A549 (cell line): ENCODE measurements at regions of chr1 and their contacts with region 1.

Region 1: DNA sequence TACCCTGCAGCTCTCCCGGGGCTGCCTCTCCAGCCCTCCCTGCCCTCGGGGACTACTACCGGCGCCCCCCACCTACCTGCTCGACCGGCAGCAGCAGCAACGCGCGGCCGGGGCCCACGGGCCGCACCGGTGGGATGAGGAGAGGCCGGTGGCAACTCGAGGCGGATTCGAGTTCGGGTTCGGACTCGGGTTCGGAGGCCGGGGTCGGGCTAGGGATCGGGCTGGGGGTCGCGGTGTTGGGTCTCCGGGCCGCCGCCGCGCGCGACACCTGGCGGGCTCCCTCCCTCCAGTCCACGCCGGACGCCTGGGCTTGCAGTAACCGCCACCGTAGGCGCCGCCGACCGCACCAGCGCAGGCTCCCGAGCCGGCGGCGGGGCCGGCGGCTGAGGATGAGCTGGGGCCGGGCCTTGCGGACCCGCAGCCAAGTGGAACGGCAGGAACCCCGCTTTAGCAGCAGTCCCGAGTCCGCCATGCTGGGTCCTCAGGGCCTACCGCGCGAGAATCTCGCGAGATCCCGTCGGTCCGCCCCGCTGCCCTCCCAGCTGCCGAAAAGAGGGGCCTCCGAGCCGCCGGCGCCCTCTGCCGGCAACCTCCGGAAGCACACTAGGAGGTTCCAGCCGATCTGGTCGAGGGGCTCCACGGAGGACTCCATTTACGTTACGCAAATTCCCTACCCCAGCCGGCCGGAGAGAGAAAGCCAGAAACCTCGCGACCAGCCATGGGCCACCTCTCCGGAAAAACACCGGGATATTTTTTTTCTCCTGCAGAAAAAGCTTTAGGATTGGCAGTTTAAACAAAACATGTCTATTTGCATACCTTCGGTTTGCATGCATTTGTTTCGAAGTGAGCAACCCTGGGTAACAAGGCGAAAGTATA is at the start of gene NOL9:
- DNase-seq: peak; percentile 74 to 86
- ATAC-seq: peak; percentile 98 to 99
- H3K4me3 ChIP-seq: peak within 1 kb of the TSS; percentile 96
- H3K27ac ChIP-seq: peak within 1 kb of the TSS; percentile 90 to 99
- H3K4me1 ChIP-seq: peaks cover 7% of the 10 kb centered on the region; the same call in 2 of the 3 replicates
- CTCF ChIP-seq: peak; percentile 72
- EP300 ChIP-seq: no peak
- POLR2A ChIP-seq: peak; percentile 69
- RAD21 ChIP-seq: peak; percentile 31 to 50; a peak in 4 of 5 replicates
- polyA plus RNA-seq, gene NOL9: 19.0 and 19.3 TPM in 2 replicates

Region 2: GRCh38 chr1:6470132-6470839 is 84.0 kb before region 1 on chr1:
- CTCF ChIA-PET with region 1: no interaction called
- POLR2A ChIA-PET with region 1: no interaction called
- DNase-seq: no peak
- ATAC-seq: no peak
- H3K4me3 ChIP-seq: no peak overlapping the region
- H3K27ac ChIP-seq: no peak overlapping the region
- H3K4me1 ChIP-seq: 0 out of 3 replicates have a peak, but pooled peaks cover 2% of the 10 kb centered on the region
- CTCF ChIP-seq: no peak
- EP300 ChIP-seq: no peak
- POLR2A ChIP-seq: no peak
- RAD21 ChIP-seq: no peak

Region 3: GRCh38 chr1:6523566-6523965 is 30.7 kb before region 1 on chr1:
- CTCF ChIA-PET with region 1: interaction called, 20 read pairs
- POLR2A ChIA-PET with region 1: no interaction called
- DNase-seq: peak; percentile 48 to 64
- ATAC-seq: peak; percentile 86
- H3K4me3 ChIP-seq: no peak overlapping the region
- H3K27ac ChIP-seq: no peak overlapping the region
- H3K4me1 ChIP-seq: no peaks in the 10 kb centered on the region
- CTCF ChIP-seq: peak; percentile 43; the same call in 2 of the 3 replicates
- EP300 ChIP-seq: no peak
- POLR2A ChIP-seq: no peak
- RAD21 ChIP-seq: peak; percentile 14 to 42; a peak in 2 of 5 replicates

Region 4: GRCh38 chr1:6569033-6569432 is 14.8 kb after region 1 on chr1:
- CTCF ChIA-PET with region 1: interaction called, 11 read pairs
- POLR2A ChIA-PET with region 1: no interaction called
- DNase-seq: no peak
- ATAC-seq: no peak
- H3K4me3 ChIP-seq: no peak overlapping the region
- H3K27ac ChIP-seq: no peak overlapping the region
- H3K4me1 ChIP-seq: no peaks in the 10 kb centered on the region
- CTCF ChIP-seq: no peak
- EP300 ChIP-seq: no peak
- POLR2A ChIP-seq: no peak
- RAD21 ChIP-seq: no peak

Region 5: GRCh38 chr1:6579374-6580118 is 25.3 kb after region 1 on chr1 and contains the start of gene ZBTB48:
- CTCF ChIA-PET with region 1: interaction called, 27 read pairs
- POLR2A ChIA-PET with region 1: interaction called, 4 read pairs
- DNase-seq: peak; percentile 92 to 96
- ATAC-seq: peak; percentile 97
- H3K4me3 ChIP-seq: peak within 1 kb of the TSS; percentile 88
- H3K27ac ChIP-seq: peak within 1 kb of the TSS; percentile 86 to 93
- H3K4me1 ChIP-seq: peaks cover 25% of the 10 kb centered on the region
- CTCF ChIP-seq: no peak
- EP300 ChIP-seq: no peak
- POLR2A ChIP-seq: peak; percentile 96
- RAD21 ChIP-seq: no peak
- polyA plus RNA-seq, gene ZBTB48: 5.8 and 8.0 TPM in 2 replicates

Region 6: DNA sequence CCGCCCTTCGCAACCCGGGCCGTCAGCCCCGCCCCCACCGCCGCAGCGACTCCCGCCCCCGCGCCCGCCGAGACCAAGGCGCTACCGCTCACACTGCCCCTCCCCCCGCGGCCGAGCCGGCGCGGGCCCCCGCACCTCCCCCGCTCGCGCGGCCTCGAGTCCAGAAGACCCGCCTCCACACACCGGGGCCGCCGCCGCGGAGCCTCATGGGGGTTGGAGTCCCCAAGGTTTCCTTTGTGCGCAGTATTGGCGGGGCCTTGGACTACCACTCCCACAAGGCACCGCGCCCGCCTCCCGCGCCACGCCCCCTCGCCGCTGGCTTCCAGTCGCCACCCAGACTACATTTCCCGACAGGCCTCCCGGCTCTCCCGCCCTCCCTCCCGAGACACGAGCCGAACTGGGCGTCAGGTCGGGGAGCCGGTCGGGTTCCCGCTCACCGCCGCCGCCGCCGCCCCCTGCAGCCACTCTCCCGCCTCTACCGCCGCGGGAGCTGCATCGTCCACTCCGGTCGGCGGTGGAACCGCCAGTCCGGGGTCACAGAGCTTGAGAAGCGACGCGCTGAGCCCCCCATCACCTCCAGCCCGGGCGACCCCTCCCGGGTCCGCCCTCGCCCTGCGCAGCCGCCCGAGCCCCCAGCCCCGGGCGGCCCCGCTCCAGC is 59.2 kb after region 1 on chr1 and contains the start of gene PHF13:
- CTCF ChIA-PET with region 1: interaction called, 13 read pairs
- POLR2A ChIA-PET with region 1: no interaction called
- DNase-seq: peak; percentile 88 to 98
- ATAC-seq: peak; percentile 90 to 96
- H3K4me3 ChIP-seq: peak within 1 kb of the TSS; percentile 99
- H3K27ac ChIP-seq: peak within 1 kb of the TSS; percentile 96 to 98
- H3K4me1 ChIP-seq: peaks cover 12% of the 10 kb centered on the region; the same call in 2 of the 3 replicates
- CTCF ChIP-seq: no peak
- EP300 ChIP-seq: no peak
- POLR2A ChIP-seq: 0 out of 2 replicates have a peak, but pooled peaks have one; percentile 10
- RAD21 ChIP-seq: no peak
- polyA plus RNA-seq, gene PHF13: 4.3 TPM in 2 replicates

Region 7: DNA sequence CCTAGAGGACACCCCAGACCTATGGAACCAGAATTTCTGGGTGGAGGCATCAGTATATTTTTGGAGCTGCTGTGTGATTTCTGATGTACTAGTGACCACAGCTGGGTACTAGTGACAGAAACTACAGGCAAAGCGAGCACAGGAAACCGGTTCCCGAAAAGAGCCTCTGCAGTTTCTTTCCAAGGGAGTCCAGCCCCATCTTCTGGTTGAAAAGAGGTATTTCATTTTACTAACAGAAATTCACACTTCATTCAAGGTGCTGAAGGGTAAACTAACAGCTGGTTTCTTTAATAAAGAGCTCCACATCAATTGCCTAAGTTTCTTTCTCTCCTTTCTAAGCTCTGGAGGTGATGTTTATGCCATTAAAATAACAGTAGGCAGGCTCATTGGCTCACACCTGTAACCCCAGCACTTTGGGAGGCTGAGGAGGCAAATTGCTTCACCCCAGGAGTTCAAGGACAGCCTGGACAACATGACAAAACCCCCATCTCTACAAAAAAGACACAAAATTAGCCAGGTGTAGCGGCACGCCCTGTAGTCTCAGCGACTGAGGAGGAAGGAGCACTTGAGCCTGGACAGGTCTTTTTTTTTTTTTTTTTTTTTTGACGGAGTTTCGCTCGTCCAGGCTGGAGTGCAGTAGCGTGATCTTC is 92.4 kb after region 1 on chr1:
- CTCF ChIA-PET with region 1: interaction called, 14 read pairs
- POLR2A ChIA-PET with region 1: no interaction called
- DNase-seq: peak; percentile 28 to 31
- ATAC-seq: peak; percentile 63 to 75; a peak in 4 of 6 replicates
- H3K4me3 ChIP-seq: no peak overlapping the region
- H3K27ac ChIP-seq: no peak overlapping the region
- H3K4me1 ChIP-seq: no peaks in the 10 kb centered on the region
- CTCF ChIP-seq: peak; percentile 49
- EP300 ChIP-seq: no peak
- POLR2A ChIP-seq: no peak
- RAD21 ChIP-seq: peak; percentile 41 to 60; a peak in 4 of 5 replicates